Activated CD4-positive, alpha-beta T cell treated with anti-CD3 and anti-CD28 coated beads, Interleukin-2, amount 10 ng/mL, durations not matched to agents 24 days and 14 days (primary cell): ENCODE measurements at regions of chr17 and their contacts with region 1.

Region 1: DNA sequence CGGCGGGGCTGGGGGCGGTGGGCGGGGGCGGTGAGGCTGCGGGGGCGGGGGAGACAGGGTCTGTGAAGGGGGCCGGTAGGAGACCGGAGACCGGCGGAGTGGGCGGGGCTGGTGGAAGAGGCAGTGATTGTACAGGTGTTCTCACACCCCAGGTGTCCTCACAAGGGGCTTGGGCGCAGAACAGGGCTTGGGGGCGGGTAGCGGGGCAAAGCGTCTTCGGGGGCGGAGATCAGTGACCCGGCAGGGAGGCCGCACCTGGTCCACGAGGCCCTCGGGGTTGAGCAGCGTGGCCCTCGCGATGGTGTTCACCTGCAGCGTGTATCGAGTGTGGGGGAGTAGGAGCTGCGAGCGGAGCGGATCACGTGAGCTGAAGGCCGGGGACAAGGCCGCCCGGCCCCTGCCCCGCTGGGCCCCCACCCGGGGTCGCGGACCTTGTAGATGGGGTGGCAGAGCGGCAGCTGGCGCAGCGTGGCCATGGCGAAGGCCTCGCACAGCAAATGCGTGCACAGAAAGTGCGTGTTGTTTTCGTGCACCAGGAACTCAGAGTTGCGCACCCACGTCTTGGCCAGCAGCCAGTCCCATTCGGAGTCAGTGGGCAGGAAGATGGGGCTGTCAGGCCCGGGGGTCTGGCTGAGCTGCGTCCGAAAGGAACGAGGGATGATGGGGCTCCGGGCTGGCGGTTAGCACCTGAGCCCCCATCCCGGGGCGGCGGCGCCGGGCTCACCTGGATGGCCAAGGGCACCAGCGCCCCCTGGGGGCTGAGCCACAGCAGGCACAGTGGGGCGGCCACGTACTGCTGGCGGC is 8.5 kb downstream of the ALOXE3 start:
- DNase-seq: peak; percentile 94
- H3K4me3 Mint-ChIP-seq: peak overlapping the region; percentile 43
- H3K27ac Mint-ChIP-seq: no peak overlapping the region
- H3K4me1 Mint-ChIP-seq: peaks cover 6% of the 10 kb centered on the region
- H3K27me3 Mint-ChIP-seq: peaks cover 42% of the 10 kb centered on the region

Region 2: GRCh38 chr17:7989781-7990655 is 119.8 kb before region 1 on chr17:
- intact Hi-C with region 1: no loop called
- DNase-seq: peak; percentile 98
- H3K4me3 Mint-ChIP-seq: peak overlapping the region; percentile 79
- H3K27ac Mint-ChIP-seq: peak overlapping the region; percentile 87
- H3K4me1 Mint-ChIP-seq: peaks cover 19% of the 10 kb centered on the region
- H3K27me3 Mint-ChIP-seq: peaks cover 22% of the 10 kb centered on the region

Region 3: DNA sequence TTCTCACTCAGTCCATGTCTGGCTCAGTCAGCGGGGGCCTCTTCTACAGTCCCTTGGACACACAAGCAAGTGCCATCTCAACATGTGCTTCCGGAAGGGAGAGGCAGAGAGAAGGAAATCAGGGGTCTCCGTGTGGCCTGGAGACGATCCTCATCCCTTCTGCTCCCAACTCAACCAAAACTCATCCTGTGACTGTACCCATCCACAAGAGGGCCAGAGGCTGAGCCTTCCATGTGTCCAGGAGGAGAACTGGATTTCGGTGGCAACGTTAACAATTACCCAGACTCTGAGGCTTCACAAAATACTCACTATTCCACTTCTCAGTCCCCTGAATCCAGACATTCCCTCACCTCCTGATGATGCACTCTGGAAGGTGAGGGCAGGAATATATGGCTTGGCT is 14.5 kb before region 1 on chr17:
- intact Hi-C with region 1: loop called (anchors 2 kb)
- DNase-seq: no peak
- H3K4me3 Mint-ChIP-seq: no peak overlapping the region
- H3K27ac Mint-ChIP-seq: no peak overlapping the region
- H3K4me1 Mint-ChIP-seq: peaks cover 8% of the 10 kb centered on the region
- H3K27me3 Mint-ChIP-seq: peaks cover 21% of the 10 kb centered on the region

Region 4: DNA sequence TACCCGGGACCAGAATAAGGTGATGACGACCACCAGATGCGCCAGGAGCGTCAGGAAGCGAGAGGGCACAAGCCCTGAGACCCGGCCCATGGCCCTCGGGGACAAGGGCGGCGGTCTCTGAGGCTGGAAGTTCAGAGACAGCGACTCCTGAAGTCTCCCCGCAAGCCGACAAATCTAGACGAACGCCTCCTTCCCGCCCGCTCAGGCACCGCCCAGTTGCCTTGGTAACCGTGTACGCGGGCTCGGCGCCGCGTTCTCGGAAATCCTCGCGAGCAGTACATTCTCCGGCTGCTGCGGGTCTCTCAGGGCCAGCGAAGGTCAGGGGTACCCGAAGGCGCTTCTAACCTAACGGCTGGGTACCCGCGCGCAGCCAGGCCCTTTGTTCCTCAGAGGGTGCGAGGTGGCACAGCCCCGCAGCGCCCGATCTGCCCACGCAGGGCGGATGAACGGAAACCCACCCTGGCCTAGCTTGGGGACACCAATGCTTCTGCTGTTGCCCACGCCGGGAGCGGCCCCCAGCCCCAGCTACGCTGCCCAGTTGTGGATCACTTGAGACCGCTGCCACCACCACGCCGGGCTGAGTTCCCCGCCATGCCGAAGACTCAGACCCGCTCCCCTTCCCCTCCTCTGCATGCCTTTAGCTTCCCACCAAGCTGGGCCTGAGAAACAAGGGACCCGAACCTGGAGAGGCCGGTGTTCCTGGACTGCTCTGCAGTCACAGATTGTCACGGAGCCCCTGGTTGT is 66.5 kb after region 1 on chr17 and contains the start of gene TMEM107:
- intact Hi-C with region 1: no loop called
- DNase-seq: peak; percentile 97
- H3K4me3 Mint-ChIP-seq: peak within 1 kb of the TSS; percentile 98
- H3K27ac Mint-ChIP-seq: peak within 1 kb of the TSS; percentile 94
- H3K4me1 Mint-ChIP-seq: peaks cover 38% of the 10 kb centered on the region
- H3K27me3 Mint-ChIP-seq: no peaks in the 10 kb centered on the region
- total RNA-seq, gene TMEM107: 20.9 and 21.4 TPM in 2 replicates